GM12878 (cell line): ENCODE measurements at regions of chr11 and their contacts with region 1.

Region 1: DNA sequence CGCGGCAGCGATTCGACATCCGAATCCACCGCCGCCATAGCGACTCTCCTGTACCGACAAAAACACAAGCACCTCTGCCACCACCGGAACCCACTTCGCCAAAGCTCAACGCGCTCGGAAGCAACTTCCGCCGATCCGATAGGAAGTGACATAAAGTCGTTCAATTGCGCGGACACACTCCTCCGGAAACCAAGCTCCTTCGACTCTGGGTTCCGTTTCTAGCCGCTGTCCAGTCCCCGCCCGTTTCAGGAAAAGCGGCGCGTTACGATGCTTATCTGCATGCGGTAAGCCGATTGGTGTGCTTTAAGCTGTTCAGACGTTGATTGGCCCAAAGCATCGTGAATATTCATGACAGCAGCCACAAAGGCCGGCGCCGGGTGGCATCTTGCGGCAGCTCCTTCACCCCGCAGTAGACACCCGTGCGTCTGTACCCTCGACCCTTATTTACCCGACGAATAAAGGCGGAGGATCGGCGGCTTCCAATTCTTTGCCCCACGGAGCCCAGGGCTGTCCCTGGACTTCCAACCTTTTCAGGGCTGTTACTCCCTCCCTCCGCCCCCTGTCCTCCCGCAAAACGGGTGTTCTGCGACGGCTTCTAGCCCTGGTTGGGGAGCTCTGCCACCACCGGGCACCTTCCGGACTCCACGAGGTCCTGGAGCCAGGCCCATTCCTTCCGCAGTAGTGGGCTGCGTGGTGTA is at the start of gene TUT1:
- DNase-seq: peak; percentile 98
- ATAC-seq: peak; percentile 93
- H3K4me3 ChIP-seq: peak within 1 kb of the TSS; percentile 99
- H3K27ac ChIP-seq: peak within 1 kb of the TSS; percentile 76
- H3K4me1 ChIP-seq: peaks cover 8% of the 10 kb centered on the region
- H3K27me3 ChIP-seq: no peaks in the 10 kb centered on the region
- CTCF ChIP-seq: no peak
- EP300 ChIP-seq: peak in 1 of 2 experiments; percentile 36; a peak in 1 of 4 replicates
- POLR2A ChIP-seq: peak; percentile 97
- RAD21 ChIP-seq: no peak
- polyA plus RNA-seq, gene TUT1: 1.1 to 1.4 TPM

Region 2: DNA sequence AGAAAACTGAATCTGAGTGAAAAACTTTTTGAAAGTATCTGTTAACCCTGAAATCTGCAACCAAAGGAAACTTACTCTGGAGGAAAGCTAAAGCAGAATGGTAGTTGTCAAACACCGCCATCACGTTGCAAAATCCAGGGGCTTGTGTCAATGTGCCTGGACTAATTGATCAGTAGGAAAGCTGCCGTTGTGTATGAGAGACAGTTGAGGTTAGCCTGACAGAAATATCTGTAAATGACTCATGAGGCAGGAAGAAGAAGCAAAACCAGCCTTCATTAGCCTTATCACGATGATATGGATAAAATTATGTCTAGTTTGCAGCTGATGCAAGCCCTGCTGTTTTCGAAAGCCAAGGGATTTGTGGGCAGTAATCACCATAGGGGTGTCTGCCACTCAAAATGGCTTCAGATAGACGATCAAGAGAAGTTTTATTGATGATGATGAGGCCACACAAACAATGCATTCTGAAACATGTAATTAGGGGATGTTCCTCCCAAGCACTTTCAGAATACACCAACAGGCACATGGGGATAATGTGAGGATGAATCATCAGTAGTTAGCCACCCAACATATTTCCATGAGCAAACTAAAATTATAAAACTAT is 163.9 kb before region 1 on chr11:
- CTCF ChIA-PET with region 1: interaction called, 34 read pairs
- POLR2A ChIA-PET with region 1: no interaction called
- RAD21 ChIA-PET with region 1: interaction called, 28 read pairs
- SMC1A ChIA-PET with region 1: interaction called, 8 read pairs
- in situ Hi-C with region 1: no loop called
- intact Hi-C with region 1: no loop called
- DNase-seq: peak; percentile 41
- ATAC-seq: peak; percentile 76
- H3K4me3 ChIP-seq: no peak overlapping the region
- H3K27ac ChIP-seq: no peak overlapping the region
- H3K4me1 ChIP-seq: peaks cover 7% of the 10 kb centered on the region
- H3K27me3 ChIP-seq: no peaks in the 10 kb centered on the region; a peak in 1 of 4 replicates
- CTCF ChIP-seq: no peak
- EP300 ChIP-seq: peak; percentile 22 to 26; a peak in 2 of 4 replicates
- POLR2A ChIP-seq: no peak
- RAD21 ChIP-seq: no peak

Region 3: DNA sequence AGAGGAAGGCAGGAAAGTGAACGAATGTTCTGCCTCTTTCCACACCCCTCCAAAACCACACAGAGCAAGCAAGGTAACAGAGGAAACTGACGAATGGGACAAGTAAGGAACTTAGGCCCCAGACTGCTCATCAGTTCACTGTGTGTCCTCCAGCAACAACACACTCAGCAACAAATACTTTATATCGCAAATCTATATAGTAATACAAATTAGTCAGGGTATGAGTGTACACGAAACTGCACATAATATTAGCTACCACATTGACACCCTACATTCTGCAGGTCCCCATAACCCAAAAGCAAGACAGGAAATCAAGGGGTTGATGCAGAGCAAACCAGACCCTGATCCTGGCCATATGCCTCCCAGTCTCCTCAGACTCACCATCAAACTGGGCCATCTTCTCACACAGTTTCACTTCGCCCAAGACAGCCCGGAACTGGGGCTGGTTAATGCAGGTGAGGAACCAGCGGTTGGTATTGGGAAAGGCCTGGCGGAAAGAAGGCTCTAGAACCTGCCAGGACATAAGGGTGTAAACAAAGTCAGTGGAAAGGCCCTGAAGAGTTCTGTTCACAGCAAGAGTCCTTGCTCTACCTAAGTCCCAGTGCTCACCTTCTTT is 24.5 kb before region 1 on chr11:
- CTCF ChIA-PET with region 1: interaction called, 27 read pairs
- POLR2A ChIA-PET with region 1: interaction called, 37 read pairs
- RAD21 ChIA-PET with region 1: interaction called, 3 read pairs
- SMC1A ChIA-PET with region 1: interaction called, 8 read pairs
- in situ Hi-C with region 1: no loop called
- intact Hi-C with region 1: no loop called
- DNase-seq: no peak
- ATAC-seq: peak; percentile 79
- H3K4me3 ChIP-seq: no peak overlapping the region
- H3K27ac ChIP-seq: peak overlapping the region; percentile 8
- H3K4me1 ChIP-seq: peaks cover 22% of the 10 kb centered on the region
- H3K27me3 ChIP-seq: no peaks in the 10 kb centered on the region
- CTCF ChIP-seq: no peak
- EP300 ChIP-seq: no peak
- POLR2A ChIP-seq: no peak
- RAD21 ChIP-seq: no peak

Region 4: DNA sequence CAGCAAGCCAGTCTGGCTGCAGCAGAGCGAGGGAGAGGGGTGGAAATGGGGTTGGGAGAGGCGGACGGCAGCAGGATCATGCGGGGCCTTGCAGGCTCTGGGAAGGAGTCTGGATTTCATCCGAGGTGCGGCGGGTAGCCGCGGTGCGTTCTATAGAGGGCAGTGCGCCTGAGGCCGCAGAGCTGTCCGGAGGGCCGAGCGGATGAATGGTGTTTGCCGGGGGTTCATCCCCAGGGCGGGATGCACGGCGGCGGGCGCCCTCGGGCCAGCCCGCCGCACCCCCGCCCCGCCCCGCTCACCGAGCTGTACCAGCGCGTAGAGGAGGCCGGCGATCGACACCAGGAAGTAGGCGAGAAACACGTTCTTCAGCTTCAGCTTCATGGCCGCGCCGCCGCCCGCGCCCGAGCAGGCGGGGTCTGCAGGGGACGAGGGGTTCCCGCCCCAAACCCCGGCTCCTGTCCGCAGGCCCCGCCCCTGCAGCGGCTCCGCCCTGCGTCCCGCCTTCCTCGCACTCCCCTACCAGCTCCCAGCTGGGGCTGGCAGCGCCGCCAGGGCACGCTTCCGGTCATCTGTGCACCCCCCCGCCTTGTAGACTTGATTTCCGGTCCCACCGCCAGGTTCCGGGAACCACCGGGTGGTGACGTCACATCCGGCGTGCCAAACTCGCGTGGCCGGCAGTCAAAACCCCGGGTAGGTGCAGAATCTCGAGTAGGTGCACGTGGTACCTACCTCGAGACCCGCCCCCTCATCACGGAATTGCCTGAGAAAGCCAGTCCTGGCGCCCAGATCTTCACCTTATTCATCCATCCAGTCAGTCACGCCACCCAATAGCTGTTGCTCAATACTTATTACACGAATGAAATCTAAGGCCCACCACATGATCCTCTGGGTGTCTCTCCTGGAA is 30.2 kb after region 1 on chr11 and contains the start of gene B3GAT3:
- CTCF ChIA-PET with region 1: interaction called, 12 read pairs
- POLR2A ChIA-PET with region 1: interaction called, 25 read pairs
- RAD21 ChIA-PET with region 1: interaction called, 25 read pairs
- SMC1A ChIA-PET with region 1: interaction called, 11 read pairs
- in situ Hi-C with region 1: no loop called
- intact Hi-C with region 1: no loop called
- DNase-seq: peak; percentile 98
- ATAC-seq: peak; percentile 98
- H3K4me3 ChIP-seq: peak within 1 kb of the TSS; percentile 84
- H3K27ac ChIP-seq: peak within 1 kb of the TSS; percentile 81
- H3K4me1 ChIP-seq: 0 out of 2 replicates have a peak, but pooled peaks cover 4% of the 10 kb centered on the region
- H3K27me3 ChIP-seq: no peaks in the 10 kb centered on the region
- CTCF ChIP-seq: no peak
- EP300 ChIP-seq: peak in 1 of 2 experiments; percentile 27; a peak in 1 of 4 replicates
- POLR2A ChIP-seq: peak; percentile 84
- RAD21 ChIP-seq: no peak
- polyA plus RNA-seq, gene B3GAT3: 0.31 to 2.8 TPM

Region 5: GRCh38 chr11:62694455-62695167 is 103.0 kb after region 1 on chr11:
- CTCF ChIA-PET with region 1: interaction called, 48 read pairs
- POLR2A ChIA-PET with region 1: no interaction called
- RAD21 ChIA-PET with region 1: interaction called, 8 read pairs
- SMC1A ChIA-PET with region 1: interaction called, 7 read pairs
- in situ Hi-C with region 1: no loop called
- intact Hi-C with region 1: no loop called
- DNase-seq: no peak
- ATAC-seq: peak; percentile 99
- H3K4me3 ChIP-seq: no peak overlapping the region
- H3K27ac ChIP-seq: no peak overlapping the region
- H3K4me1 ChIP-seq: no peaks in the 10 kb centered on the region
- H3K27me3 ChIP-seq: no peaks in the 10 kb centered on the region
- CTCF ChIP-seq: peak; percentile 79 to 86 (median 82)
- EP300 ChIP-seq: no peak
- POLR2A ChIP-seq: no peak
- RAD21 ChIP-seq: peak; percentile 83

Region 6: DNA sequence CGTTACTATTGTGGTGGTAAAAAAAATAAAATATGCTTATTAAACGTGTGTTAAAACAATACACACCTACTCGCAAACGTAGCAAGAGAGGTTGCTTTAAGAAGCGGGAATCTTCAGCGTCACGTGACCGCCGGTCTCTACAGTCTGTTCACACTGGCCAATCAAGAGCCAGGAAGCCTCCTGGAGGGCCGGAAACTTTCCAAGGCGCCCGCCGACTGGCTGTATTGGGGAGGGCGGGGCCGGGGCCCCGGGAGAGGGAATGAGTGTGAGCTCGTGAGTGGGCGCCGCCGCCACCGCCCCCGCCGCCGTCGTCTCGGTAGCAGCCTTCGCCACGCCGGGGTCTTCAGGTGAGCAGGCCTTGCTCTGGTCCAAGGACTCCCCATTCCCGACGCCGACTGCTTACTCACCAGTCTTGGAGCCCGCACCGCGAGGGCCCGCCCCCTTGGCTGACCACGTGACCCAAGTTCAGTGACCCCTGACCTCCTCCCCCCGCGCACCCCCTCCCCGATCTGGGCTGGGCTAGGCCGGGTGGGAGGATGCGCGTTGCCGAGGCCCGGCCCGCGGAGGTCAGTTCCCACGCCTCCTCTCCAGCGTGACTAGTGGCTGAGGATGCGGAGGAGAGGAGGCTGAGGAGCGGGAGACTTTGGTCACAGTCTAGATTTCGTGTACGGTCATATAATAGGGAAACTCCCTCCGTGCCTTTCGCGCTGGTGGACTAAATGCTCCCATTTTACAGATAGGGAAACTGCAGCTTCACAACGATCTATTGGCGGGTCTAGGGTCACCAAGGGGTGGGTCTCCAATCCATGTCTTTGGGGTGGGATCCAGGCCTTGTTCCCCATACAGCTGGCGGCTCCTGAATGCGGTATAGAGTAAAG is 179.8 kb after region 1 on chr11 and contains the start of gene TAF6L:
- CTCF ChIA-PET with region 1: interaction called, 19 read pairs
- POLR2A ChIA-PET with region 1: interaction called, 3 read pairs
- RAD21 ChIA-PET with region 1: no interaction called
- SMC1A ChIA-PET with region 1: interaction called, 3 read pairs
- in situ Hi-C with region 1: no loop called
- intact Hi-C with region 1: no loop called
- DNase-seq: peak; percentile 77
- ATAC-seq: peak; percentile 92
- H3K4me3 ChIP-seq: peak within 1 kb of the TSS; percentile 86
- H3K27ac ChIP-seq: peak within 1 kb of the TSS; percentile 82
- H3K4me1 ChIP-seq: peaks cover 17% of the 10 kb centered on the region
- H3K27me3 ChIP-seq: no peaks in the 10 kb centered on the region
- CTCF ChIP-seq: no peak
- EP300 ChIP-seq: 0 out of 4 replicates have a peak, but pooled peaks of 1 of the 2 experiments have one; percentile 6
- POLR2A ChIP-seq: peak; percentile 83
- RAD21 ChIP-seq: no peak
- polyA plus RNA-seq, gene TAF6L: 0.15 to 0.39 TPM